ENCODE measurements at regions of chr2 and their contacts with region 1.

Region 1: GRCh38 chr2:31413862-31414550 is 536 bp downstream of the XDH start:
- DNase-seq: peak; percentile 39
- ATAC-seq: no peak
- H3K4me3 ChIP-seq: no peak overlapping the region
- H3K27ac ChIP-seq: peak overlapping the region; percentile 12; the same call in 1 of the 2 replicates
- H3K4me1 ChIP-seq: peaks cover 34% of the 10 kb centered on the region
- H3K27me3 ChIP-seq: no peaks in the 10 kb centered on the region
- CTCF ChIP-seq: peak; percentile 53; the same call in 1 of the 2 replicates

Region 2: DNA sequence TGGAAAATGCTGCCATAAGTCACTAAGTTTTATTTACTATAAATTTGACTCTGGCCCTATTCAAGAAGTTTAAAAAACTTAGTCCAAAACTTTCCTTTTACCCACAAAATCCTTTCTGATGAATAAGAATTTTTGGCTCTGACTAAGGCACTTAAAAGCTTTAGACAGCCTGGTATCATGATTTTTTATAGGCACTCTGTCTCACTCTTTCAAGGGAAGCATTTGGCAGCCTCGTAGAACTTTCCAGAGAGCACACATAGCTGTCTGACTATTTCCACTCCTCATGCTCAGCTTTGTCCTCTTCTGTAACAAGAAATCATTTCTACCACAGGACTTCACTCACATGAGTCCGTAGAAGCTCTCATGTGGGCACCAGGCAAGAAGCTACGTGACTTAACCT is 32.8 kb after region 1 on chr2:
- CTCF ChIA-PET with region 1: no interaction called
- POLR2A ChIA-PET with region 1: no interaction called
- intact Hi-C with region 1: no loop called
- DNase-seq: peak; percentile 3
- ATAC-seq: no peak
- H3K4me3 ChIP-seq: no peak overlapping the region
- H3K27ac ChIP-seq: no peak overlapping the region
- H3K4me1 ChIP-seq: no peaks in the 10 kb centered on the region
- H3K27me3 ChIP-seq: no peaks in the 10 kb centered on the region
- CTCF ChIP-seq: no peak

Region 3: DNA sequence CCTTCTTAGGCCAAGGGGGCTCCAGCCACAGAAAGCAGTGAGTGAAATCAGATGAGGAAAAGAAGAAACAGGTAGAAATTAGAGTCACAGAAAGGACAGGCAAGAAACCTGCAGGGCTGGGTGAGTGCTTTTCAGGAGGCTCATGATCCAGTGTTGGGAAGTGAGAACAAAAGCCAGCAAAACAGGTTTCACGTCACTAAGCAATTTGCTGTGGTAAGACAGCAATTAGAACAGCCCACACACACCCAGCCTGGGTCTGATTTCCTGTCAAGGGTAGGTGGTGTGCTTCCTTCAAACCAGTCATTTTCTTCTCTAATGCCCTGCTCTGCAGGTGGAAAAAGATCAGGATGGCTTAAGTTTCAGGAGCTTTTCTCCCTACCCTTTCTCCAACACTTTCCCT is 53.4 kb after region 1 on chr2:
- CTCF ChIA-PET with region 1: no interaction called
- POLR2A ChIA-PET with region 1: no interaction called
- intact Hi-C with region 1: no loop called
- DNase-seq: no peak
- ATAC-seq: no peak
- H3K4me3 ChIP-seq: no peak overlapping the region
- H3K27ac ChIP-seq: no peak overlapping the region
- H3K4me1 ChIP-seq: no peaks in the 10 kb centered on the region
- H3K27me3 ChIP-seq: no peaks in the 10 kb centered on the region
- CTCF ChIP-seq: no peak

Region 4: DNA sequence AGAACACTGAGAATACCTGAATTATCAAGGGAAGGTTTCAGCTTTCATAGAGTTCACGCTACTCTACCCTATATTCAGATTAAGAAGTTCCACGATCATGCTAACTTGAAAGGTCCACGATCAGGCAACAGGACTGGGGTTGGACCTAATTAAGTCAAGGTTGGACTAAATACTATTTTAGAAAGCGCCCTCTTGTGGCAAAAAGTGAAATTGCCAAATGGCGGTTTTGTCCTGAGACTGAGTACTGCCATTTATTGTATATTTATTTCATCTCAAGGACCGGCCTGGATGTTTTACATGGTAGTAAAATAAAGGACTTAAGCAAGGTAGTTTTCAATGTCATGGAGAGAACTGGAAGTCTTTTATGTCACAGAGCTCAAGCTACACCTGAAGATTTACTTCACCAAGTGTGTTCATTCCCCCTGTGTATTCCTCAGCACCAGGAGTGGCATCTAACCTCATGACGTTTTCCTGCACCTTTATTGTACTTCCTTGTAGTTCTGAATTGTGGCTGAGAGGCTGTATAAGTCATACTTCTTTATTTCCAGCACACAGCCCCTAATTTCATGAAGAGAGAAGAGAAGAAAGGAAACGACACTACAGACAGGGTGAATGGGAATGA is 110.0 kb after region 1 on chr2:
- CTCF ChIA-PET with region 1: no interaction called
- POLR2A ChIA-PET with region 1: no interaction called
- intact Hi-C with region 1: loop called (anchors 2 kb)
- DNase-seq: peak; percentile 86
- ATAC-seq: peak; percentile 69
- H3K4me3 ChIP-seq: no peak overlapping the region
- H3K27ac ChIP-seq: no peak overlapping the region
- H3K4me1 ChIP-seq: no peaks in the 10 kb centered on the region
- H3K27me3 ChIP-seq: peaks cover 36% of the 10 kb centered on the region
- CTCF ChIP-seq: peak; percentile 89

Measured in PC-3 (cell line).